H1 (cell line): ENCODE measurements at regions of chr11 and their contacts with region 1.

Region 1: GRCh38 chr11:84947967-84948580 is 679.1 kb downstream of the DLG2 start:
- DNase-seq: no peak
- H3K4me3 ChIP-seq: no peak overlapping the region
- H3K27ac ChIP-seq: no peak overlapping the region
- H3K4me1 ChIP-seq: 0 out of 7 replicates have a peak, but pooled peaks cover 0 to 2% (median 0%) of the 10 kb centered on the region in 4 experiments
- H3K27me3 ChIP-seq: no peaks in the 10 kb centered on the region
- CTCF ChIP-seq: no peak
- EP300 ChIP-seq: no peak
- POLR2A ChIP-seq: no peak
- RAD21 ChIP-seq: no peak

Region 2: GRCh38 chr11:84962018-84962417 is 13.9 kb after region 1 on chr11:
- CTCF ChIA-PET with region 1: interaction called, 11 read pairs
- POLR2A ChIA-PET with region 1: interaction called, 3 read pairs
- DNase-seq: no peak
- H3K4me3 ChIP-seq: no peak overlapping the region
- H3K27ac ChIP-seq: no peak overlapping the region
- H3K4me1 ChIP-seq: peaks cover 0 to 3% (median 0%) of the 10 kb centered on the region in 4 experiments; a peak in 2 of 7 replicates
- H3K27me3 ChIP-seq: no peaks in the 10 kb centered on the region
- CTCF ChIP-seq: no peak
- EP300 ChIP-seq: no peak
- POLR2A ChIP-seq: no peak
- RAD21 ChIP-seq: no peak